Adrenal gland (tissue), 19 donors: ENCODE measurements at regions of chr3 and their contacts with region 1.

Region 1: DNA sequence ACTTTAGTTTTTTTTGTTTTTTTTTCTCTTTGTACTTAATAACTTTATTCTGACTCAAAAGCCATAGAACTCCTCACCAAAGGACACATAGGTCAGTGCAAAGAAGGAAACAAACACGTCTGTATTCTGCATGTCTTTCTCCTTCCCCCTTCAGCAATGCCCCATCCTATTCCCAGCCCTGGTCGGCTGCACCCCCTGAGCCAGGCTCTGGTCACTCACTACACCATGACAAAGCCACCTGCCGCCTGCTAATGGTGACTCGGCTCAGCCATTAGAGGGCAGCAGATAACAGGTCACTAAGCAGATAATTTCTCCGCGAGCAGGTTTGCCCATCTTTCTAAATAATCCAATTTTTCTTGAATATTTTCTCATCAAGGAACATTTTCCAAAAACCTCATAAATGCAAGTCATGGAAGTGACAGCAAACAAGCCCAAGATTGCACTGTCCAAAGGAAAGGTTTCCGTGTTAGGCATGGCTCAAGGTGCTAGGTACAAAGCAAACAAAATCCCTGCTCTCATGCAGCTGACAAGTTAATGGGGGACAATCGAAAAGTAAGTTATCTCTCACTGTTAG is 37.8 kb downstream of the TM4SF4 start:
- DNase-seq: peak; percentile 57 to 86 (median 74)
- H3K4me3 ChIP-seq: no peak overlapping the region
- H3K27ac ChIP-seq: no peak overlapping the region
- H3K4me1 ChIP-seq: no peaks in the 10 kb centered on the region
- H3K27me3 ChIP-seq: no peaks in the 10 kb centered on the region
- CTCF ChIP-seq: peak; percentile 67 to 88 (median 80)
- POLR2A ChIP-seq: no peak

Region 2: GRCh38 chr3:149717391-149718056 is 205.2 kb after region 1 on chr3:
- intact Hi-C with region 1: loop called (anchors 2 to 5 kb)
- DNase-seq: peak; percentile 45 to 86 (median 60)
- H3K4me3 ChIP-seq: peak overlapping the region in 2 of 4 donors; percentile 6 to 42
- H3K27ac ChIP-seq: no peak overlapping the region
- H3K4me1 ChIP-seq: peaks cover 0 to 3% of the 10 kb centered on the region in 2 donors
- H3K27me3 ChIP-seq: no peaks in the 10 kb centered on the region
- CTCF ChIP-seq: peak; percentile 50 to 92 (median 82)
- POLR2A ChIP-seq: no peak

Region 3: GRCh38 chr3:149771652-149772271 is 259.5 kb after region 1 on chr3:
- intact Hi-C with region 1: loop called (anchors 10 kb)
- DNase-seq: peak; percentile 33 to 65 (median 57)
- H3K4me3 ChIP-seq: no peak overlapping the region
- H3K27ac ChIP-seq: no peak overlapping the region
- H3K4me1 ChIP-seq: no peaks in the 10 kb centered on the region
- H3K27me3 ChIP-seq: no peaks in the 10 kb centered on the region
- CTCF ChIP-seq: peak; percentile 45 to 79 (median 74)
- POLR2A ChIP-seq: no peak